ENCODE measurements at regions of chrX and their contacts with region 1.

Region 1: DNA sequence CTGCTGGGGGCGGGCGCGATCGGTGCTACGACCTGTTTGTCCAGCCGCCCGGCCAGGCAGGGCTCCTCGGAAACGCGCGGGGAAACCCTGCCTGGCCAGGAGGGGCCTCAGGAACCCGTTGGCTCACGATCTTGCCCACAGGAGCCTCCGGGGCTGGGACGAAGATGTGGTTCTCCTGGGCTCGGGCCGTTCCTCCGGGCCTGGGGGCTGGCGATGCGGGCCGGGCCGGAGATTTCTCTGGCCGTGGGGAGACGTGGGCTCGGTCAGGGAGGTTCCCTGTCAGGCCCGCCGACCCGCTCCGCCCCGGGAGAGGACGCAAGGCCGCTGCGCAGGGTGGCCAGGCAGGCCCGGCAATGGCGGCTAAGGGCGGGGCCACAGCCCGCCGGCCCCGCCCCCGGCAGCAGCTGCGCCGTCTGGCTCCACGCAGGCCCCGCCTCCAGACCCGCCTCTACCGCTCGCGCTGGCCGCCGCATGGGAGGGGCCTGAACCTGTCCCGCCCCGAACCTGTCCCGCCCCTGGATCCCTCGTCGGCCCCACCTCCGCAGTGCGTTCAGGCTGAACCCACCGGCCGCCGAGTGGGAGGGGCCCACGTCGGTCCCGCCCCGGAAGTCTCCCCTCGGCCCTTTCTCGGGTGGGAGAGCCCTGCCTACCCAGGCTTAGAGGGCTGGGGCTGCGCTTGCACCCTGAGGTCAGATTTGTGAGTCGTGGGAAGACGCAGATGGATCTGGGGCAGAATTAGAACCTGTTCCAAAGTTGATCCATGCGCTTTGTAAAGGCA is at the start of gene FAM3A:
- DNase-seq: peak; percentile 80 to 96 (median 90)
- ATAC-seq: peak; percentile 84 to 93
- H3K4me3 Mint-ChIP-seq: peak within 1 kb of the TSS; percentile 77 to 91 (median 85)
- H3K27ac Mint-ChIP-seq: peak within 1 kb of the TSS; percentile 87 to 95 (median 93)
- H3K4me1 Mint-ChIP-seq: peaks cover 10 to 33% (median 31%) of the 10 kb centered on the region in 4 donors
- H3K27me3 Mint-ChIP-seq: no peaks in the 10 kb centered on the region
- polyA plus RNA-seq, gene FAM3A: 24.3 to 33.3 (median 26.0) TPM

Region 2: GRCh38 chrX:154411322-154411980 is 104.6 kb before region 1 on chrX and contains the start of gene TAFAZZIN:
- POLR2A ChIA-PET with region 1: interaction called, 12 read pairs
- DNase-seq: peak; percentile 51 to 81 (median 66)
- ATAC-seq: peak; percentile 71 to 77
- H3K4me3 Mint-ChIP-seq: peak within 1 kb of the TSS; percentile 85 to 94 (median 90)
- H3K27ac Mint-ChIP-seq: peak within 1 kb of the TSS; percentile 87 to 97 (median 96)
- H3K4me1 Mint-ChIP-seq: peaks cover 12 to 22% (median 16%) of the 10 kb centered on the region in 4 donors
- H3K27me3 Mint-ChIP-seq: no peaks in the 10 kb centered on the region
- polyA plus RNA-seq, gene TAFAZZIN: 29.3 to 39.8 (median 37.8) TPM

Region 3: GRCh38 chrX:154443992-154444754 is 71.9 kb before region 1 on chrX and contains the start of gene FAM50A:
- POLR2A ChIA-PET with region 1: no interaction called
- DNase-seq: peak; percentile 50 to 78 (median 60)
- ATAC-seq: peak; percentile 81 to 83
- H3K4me3 Mint-ChIP-seq: peak within 1 kb of the TSS; percentile 54 to 85 (median 77)
- H3K27ac Mint-ChIP-seq: peak within 1 kb of the TSS; percentile 45 to 95 (median 79)
- H3K4me1 Mint-ChIP-seq: peaks cover 1 to 31% (median 15%) of the 10 kb centered on the region in 4 donors
- H3K27me3 Mint-ChIP-seq: no peaks in the 10 kb centered on the region
- polyA plus RNA-seq, gene FAM50A: 25.1 to 45.6 (median 40.4) TPM

Region 4: GRCh38 chrX:154458114-154458953 is 57.7 kb before region 1 on chrX and contains the start of gene PLXNA3:
- POLR2A ChIA-PET with region 1: interaction called, 10 read pairs
- DNase-seq: peak; percentile 33 to 83 (median 69)
- ATAC-seq: peak; percentile 77 to 84
- H3K4me3 Mint-ChIP-seq: peak within 1 kb of the TSS; percentile 89 to 99 (median 93)
- H3K27ac Mint-ChIP-seq: peak within 1 kb of the TSS; percentile 58 to 99 (median 94)
- H3K4me1 Mint-ChIP-seq: peaks cover 8 to 28% (median 19%) of the 10 kb centered on the region in 4 donors
- H3K27me3 Mint-ChIP-seq: no peaks in the 10 kb centered on the region
- polyA plus RNA-seq, gene PLXNA3: 0.27 to 0.67 (median 0.36) TPM

Region 5: GRCh38 chrX:154490414-154491083 is 25.5 kb before region 1 on chrX and contains the start of gene SLC10A3:
- POLR2A ChIA-PET with region 1: interaction called, 54 read pairs
- DNase-seq: peak; percentile 72 to 93 (median 81)
- ATAC-seq: peak; percentile 80 to 83
- H3K4me3 Mint-ChIP-seq: peak within 1 kb of the TSS; percentile 83 to 93 (median 87)
- H3K27ac Mint-ChIP-seq: peak within 1 kb of the TSS; percentile 73 to 96 (median 94)
- H3K4me1 Mint-ChIP-seq: peaks cover 4 to 30% (median 20%) of the 10 kb centered on the region in 4 donors
- H3K27me3 Mint-ChIP-seq: no peaks in the 10 kb centered on the region
- polyA plus RNA-seq, gene SLC10A3: 30.5 to 42.3 (median 35.9) TPM

Region 6: DNA sequence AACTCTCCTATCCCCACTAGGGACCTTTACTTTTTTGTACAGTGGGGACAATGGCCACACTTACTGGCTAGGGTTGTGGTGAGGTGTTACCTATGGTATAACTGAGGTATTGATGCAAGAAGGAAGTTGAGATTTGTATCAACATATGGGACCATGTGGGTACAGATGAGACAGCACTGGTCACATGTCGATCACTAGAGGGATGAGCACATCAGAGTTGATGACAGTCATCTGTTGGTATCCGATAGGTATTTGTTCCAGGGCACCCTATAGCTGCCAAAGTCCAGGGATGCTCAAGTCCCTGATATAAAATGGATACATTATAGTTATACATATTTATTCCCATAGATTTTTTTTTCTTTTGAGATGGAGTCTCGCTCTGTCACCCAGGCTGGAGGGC is 13.1 kb before region 1 on chrX:
- POLR2A ChIA-PET with region 1: interaction called, 14 read pairs
- DNase-seq: no peak
- ATAC-seq: no peak
- H3K4me3 Mint-ChIP-seq: no peak overlapping the region
- H3K27ac Mint-ChIP-seq: no peak overlapping the region
- H3K4me1 Mint-ChIP-seq: no peaks in the 10 kb centered on the region
- H3K27me3 Mint-ChIP-seq: no peaks in the 10 kb centered on the region

Region 7: DNA sequence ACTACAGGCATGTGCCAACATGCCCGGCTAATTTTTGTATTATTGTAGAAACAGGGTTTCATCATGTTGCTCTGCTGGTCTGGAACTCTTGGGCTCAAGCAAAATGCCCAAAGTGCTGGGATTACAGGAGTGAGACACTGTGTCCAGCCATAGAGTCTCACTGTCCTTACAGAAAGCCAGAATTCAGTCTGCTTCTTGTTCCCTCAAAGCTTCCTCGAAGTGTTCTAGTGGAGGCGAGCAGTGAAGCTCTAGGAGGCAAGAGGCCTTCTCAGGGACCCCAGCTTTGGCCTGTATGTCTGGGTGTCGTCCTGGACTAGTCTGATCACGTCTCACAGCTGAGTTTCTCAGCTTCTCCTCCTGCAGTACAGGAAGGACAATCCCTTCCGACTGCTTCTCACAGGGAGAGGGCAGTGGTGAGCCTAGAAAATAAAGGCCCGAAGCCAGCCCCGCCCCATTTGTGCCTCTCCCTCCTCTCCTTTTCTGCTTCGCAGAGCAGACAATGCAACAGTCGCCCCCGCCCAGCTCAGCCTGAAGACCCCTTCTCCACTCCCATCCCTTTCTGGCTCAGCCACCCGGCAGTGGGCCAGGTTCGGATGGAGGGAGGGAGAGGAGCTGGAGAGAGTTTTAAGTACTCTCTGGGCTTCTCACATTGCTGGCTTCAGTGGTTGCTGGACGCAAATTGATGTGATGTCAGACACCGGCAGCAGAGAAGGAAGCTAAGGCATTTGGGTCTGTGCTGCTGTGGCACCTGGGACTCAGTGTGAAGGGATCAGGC is 11.0 kb after region 1 on chrX:
- POLR2A ChIA-PET with region 1: interaction called, 36 read pairs
- DNase-seq: peak in 8 of 10 donors; percentile 29 to 72 (median 40)
- ATAC-seq: peak; percentile 80 to 85
- H3K4me3 Mint-ChIP-seq: peak overlapping the region in 6 of 10 donors; percentile 10 to 56 (median 34)
- H3K27ac Mint-ChIP-seq: peak overlapping the region in 8 of 10 donors; percentile 52 to 80 (median 72)
- H3K4me1 Mint-ChIP-seq: peaks cover 3 to 26% (median 20%) of the 10 kb centered on the region in 4 donors
- H3K27me3 Mint-ChIP-seq: no peaks in the 10 kb centered on the region

Measured in naive thymus-derived CD8-positive, alpha-beta T cell (primary cell).